ENCODE measurements at regions of chr1 and their contacts with region 1.

Region 1: DNA sequence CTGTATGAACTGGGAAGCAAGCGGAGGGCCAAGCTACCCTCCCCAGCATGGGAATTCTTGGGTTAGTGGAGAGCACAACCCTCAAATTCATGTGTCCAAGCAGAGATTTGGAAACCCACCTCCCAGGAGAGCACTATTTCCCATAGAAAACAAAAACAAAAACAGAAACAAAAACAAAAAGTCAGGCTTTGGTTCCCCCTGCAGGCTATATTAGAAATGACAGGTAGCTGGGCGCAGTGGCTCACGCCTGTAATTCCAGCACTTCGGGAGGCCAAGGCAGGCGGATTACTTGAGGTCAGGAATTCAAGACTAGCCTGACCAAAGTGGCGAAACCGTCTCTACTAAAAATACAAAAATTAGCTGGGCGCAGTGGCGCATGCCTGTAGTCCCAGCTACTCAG is 10.8 kb downstream of the MINDY1 start:
- DNase-seq: peak in 2 of 9 donors; percentile 22 to 41
- ATAC-seq: peak; percentile 75
- H3K4me3 ChIP-seq: no peak overlapping the region
- H3K4me3 Mint-ChIP-seq: no peak overlapping the region
- H3K27ac ChIP-seq: peak overlapping the region; percentile 41
- H3K27ac Mint-ChIP-seq: peak overlapping the region; percentile 19 to 91 (median 69)
- H3K4me1 ChIP-seq: peaks cover 3 to 21% of the 10 kb centered on the region in 2 donors
- H3K4me1 Mint-ChIP-seq: peaks cover 5 to 25% (median 21%) of the 10 kb centered on the region in 7 donors
- H3K27me3 ChIP-seq: no peaks in the 10 kb centered on the region
- H3K27me3 Mint-ChIP-seq: no peaks in the 10 kb centered on the region

Region 2: GRCh38 chr1:150225546-150225945 is 770.4 kb before region 1 on chr1:
- CTCF ChIA-PET with region 1: no interaction called
- POLR2A ChIA-PET with region 1: no interaction called
- intact Hi-C with region 1: no loop called
- DNase-seq: no peak
- ATAC-seq: no peak
- H3K4me3 ChIP-seq: no peak overlapping the region
- H3K4me3 Mint-ChIP-seq: no peak overlapping the region
- H3K27ac ChIP-seq: no peak overlapping the region
- H3K27ac Mint-ChIP-seq: peak overlapping the region in 1 of 9 donors; percentile 25
- H3K4me1 ChIP-seq: no peaks in the 10 kb centered on the region
- H3K4me1 Mint-ChIP-seq: peaks cover 0 to 22% (median 0%) of the 10 kb centered on the region in 7 donors
- H3K27me3 ChIP-seq: no peaks in the 10 kb centered on the region
- H3K27me3 Mint-ChIP-seq: no peaks in the 10 kb centered on the region

Region 3: GRCh38 chr1:150362721-150363425 is 633.0 kb before region 1 on chr1:
- CTCF ChIA-PET with region 1: no interaction called
- POLR2A ChIA-PET with region 1: no interaction called
- intact Hi-C with region 1: no loop called
- DNase-seq: peak in 3 of 9 donors; percentile 2 to 49 (median 30)
- ATAC-seq: no peak
- H3K4me3 ChIP-seq: peak overlapping the region; percentile 99
- H3K4me3 Mint-ChIP-seq: peak overlapping the region; percentile 86 to 100 (median 98)
- H3K27ac ChIP-seq: peak overlapping the region; percentile 84
- H3K27ac Mint-ChIP-seq: peak overlapping the region; percentile 95 to 100 (median 98)
- H3K4me1 ChIP-seq: peaks cover 9 to 10% of the 10 kb centered on the region in 2 donors
- H3K4me1 Mint-ChIP-seq: peaks cover 22 to 33% (median 28%) of the 10 kb centered on the region in 7 donors
- H3K27me3 ChIP-seq: no peaks in the 10 kb centered on the region
- H3K27me3 Mint-ChIP-seq: peaks cover 0 to 2% (median 0%) of the 10 kb centered on the region in 5 donors

Region 4: DNA sequence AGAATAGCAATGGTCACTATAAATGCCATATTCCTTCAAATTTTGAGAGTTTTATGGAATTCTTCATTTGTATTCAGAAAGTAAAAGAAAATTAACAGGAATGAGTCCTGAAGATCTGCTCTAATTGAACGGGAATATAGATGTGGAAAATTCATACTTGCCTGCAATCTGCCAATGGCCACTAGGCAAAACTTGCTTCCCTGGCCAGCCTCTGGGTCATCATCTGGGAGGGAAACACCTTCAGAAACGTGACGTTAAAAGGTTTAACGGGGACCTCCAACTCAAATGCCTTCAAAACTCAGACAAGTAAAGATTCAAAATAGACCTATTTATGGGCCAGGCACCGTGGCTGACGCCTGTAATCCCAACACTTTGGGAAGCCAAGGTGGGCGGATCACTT is 166.2 kb before region 1 on chr1:
- CTCF ChIA-PET with region 1: no interaction called
- POLR2A ChIA-PET with region 1: no interaction called
- intact Hi-C with region 1: loop called in 1 of 2 experiments (anchors 10 kb)
- DNase-seq: no peak
- ATAC-seq: no peak
- H3K4me3 ChIP-seq: no peak overlapping the region
- H3K4me3 Mint-ChIP-seq: no peak overlapping the region
- H3K27ac ChIP-seq: no peak overlapping the region
- H3K27ac Mint-ChIP-seq: no peak overlapping the region
- H3K4me1 ChIP-seq: no peaks in the 10 kb centered on the region
- H3K4me1 Mint-ChIP-seq: peaks cover 0 to 3% (median 0%) of the 10 kb centered on the region in 7 donors
- H3K27me3 ChIP-seq: no peaks in the 10 kb centered on the region
- H3K27me3 Mint-ChIP-seq: no peaks in the 10 kb centered on the region

Region 5: DNA sequence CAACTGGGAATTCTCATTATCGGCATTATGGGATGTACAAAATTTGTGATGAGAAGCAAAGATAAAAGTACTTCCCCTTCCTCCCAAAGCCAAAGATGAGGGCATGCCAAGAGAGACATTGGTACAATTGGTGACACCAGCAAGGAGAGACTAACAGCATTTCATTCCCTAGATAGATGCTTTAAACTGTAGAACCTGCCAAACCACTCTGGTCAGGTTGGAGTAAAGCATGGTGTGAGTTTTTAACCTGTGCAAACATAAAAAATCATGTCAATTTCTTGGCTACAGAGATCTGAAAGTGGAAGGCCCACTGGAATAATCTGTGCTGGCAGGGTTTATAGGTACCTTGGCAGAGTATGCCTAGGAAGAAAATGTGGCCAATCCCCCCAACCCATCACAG is 89.6 kb before region 1 on chr1:
- CTCF ChIA-PET with region 1: no interaction called
- POLR2A ChIA-PET with region 1: no interaction called
- intact Hi-C with region 1: no loop called
- DNase-seq: no peak
- ATAC-seq: no peak
- H3K4me3 ChIP-seq: no peak overlapping the region
- H3K4me3 Mint-ChIP-seq: no peak overlapping the region
- H3K27ac ChIP-seq: no peak overlapping the region
- H3K27ac Mint-ChIP-seq: no peak overlapping the region
- H3K4me1 ChIP-seq: no peaks in the 10 kb centered on the region
- H3K4me1 Mint-ChIP-seq: no peaks in the 10 kb centered on the region
- H3K27me3 ChIP-seq: no peaks in the 10 kb centered on the region
- H3K27me3 Mint-ChIP-seq: peaks cover 0 to 3% (median 0%) of the 10 kb centered on the region in 5 donors

Region 6: GRCh38 chr1:151124763-151125403 is 129.0 kb after region 1 on chr1:
- CTCF ChIA-PET with region 1: no interaction called
- POLR2A ChIA-PET with region 1: no interaction called
- intact Hi-C with region 1: no loop called
- DNase-seq: no peak
- ATAC-seq: no peak
- H3K4me3 ChIP-seq: no peak overlapping the region
- H3K4me3 Mint-ChIP-seq: no peak overlapping the region
- H3K27ac ChIP-seq: no peak overlapping the region
- H3K27ac Mint-ChIP-seq: peak overlapping the region in 1 of 9 donors; percentile 43
- H3K4me1 ChIP-seq: no peaks in the 10 kb centered on the region
- H3K4me1 Mint-ChIP-seq: peaks cover 0 to 4% (median 0%) of the 10 kb centered on the region in 7 donors
- H3K27me3 ChIP-seq: no peaks in the 10 kb centered on the region
- H3K27me3 Mint-ChIP-seq: no peaks in the 10 kb centered on the region

Measured in naive thymus-derived CD4-positive, alpha-beta T cell (primary cell).